ENCODE measurements at regions of chr1 and their contacts with region 1.

Region 1: GRCh38 chr1:80003250-80003649 is 996.7 kb upstream of the ADGRL4 start:
- DNase-seq: no peak
- H3K4me3 Mint-ChIP-seq: no peak overlapping the region
- H3K27ac Mint-ChIP-seq: no peak overlapping the region
- H3K4me1 Mint-ChIP-seq: no peaks in the 10 kb centered on the region
- H3K27me3 Mint-ChIP-seq: no peaks in the 10 kb centered on the region
- CTCF ChIP-seq: no peak

Region 2: DNA sequence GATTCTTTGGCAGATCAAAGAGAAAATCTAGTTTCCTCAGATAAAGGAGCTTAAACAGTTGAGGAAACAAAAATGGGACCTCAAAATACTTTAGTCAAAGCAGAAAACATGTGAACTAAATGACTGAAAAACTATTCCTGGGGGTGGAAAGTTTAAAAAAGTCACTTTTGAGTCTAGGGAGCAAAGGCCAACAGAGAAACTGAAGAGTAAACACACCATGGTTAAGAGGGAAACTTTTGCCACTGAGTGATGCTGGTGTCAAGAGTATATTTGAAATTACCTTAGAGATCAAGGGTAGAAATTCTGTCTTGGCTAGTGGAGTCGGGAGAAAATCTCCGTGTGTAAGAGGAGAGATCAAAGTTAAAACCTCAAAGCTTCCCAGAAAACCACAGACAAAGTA is 495.5 kb before region 1 on chr1:
- CTCF ChIA-PET with region 1: no interaction called
- intact Hi-C with region 1: loop called (anchors 5 kb)
- DNase-seq: no peak
- H3K4me3 Mint-ChIP-seq: no peak overlapping the region
- H3K27ac Mint-ChIP-seq: no peak overlapping the region
- H3K4me1 Mint-ChIP-seq: peaks cover 7% of the 10 kb centered on the region
- H3K27me3 Mint-ChIP-seq: no peaks in the 10 kb centered on the region
- CTCF ChIP-seq: no peak

Region 3: DNA sequence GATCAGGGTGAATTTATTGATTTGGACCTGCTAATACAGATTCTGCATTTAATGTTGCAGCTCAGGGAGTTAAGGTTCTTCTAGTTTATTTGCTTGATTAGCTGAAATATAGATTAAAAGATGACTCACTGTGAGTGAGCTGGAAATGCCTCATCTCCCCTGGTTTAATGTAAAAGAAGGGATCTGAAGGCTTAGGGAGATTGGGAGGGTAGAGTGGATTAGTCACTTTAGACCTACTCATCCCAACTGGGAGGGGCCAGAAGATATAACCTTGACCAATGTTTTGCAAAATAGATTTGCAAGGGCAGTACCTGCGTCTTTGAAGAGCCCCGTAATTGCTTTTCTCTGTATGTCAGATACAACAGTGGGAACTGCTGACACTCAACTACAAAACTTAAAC is 73.9 kb before region 1 on chr1:
- CTCF ChIA-PET with region 1: no interaction called
- intact Hi-C with region 1: loop called (anchors 10 kb)
- DNase-seq: no peak
- H3K4me3 Mint-ChIP-seq: no peak overlapping the region
- H3K27ac Mint-ChIP-seq: no peak overlapping the region
- H3K4me1 Mint-ChIP-seq: no peaks in the 10 kb centered on the region
- H3K27me3 Mint-ChIP-seq: no peaks in the 10 kb centered on the region
- CTCF ChIP-seq: no peak

Measured in Calu3 (cell line).